HepG2 (cell line): ENCODE measurements at regions of chr6 and their contacts with region 1.

Region 1: GRCh38 chr6:45714741-45715507 is 300.7 kb downstream of the CLIC5 start:
- DNase-seq: peak; percentile 74
- ATAC-seq: peak; percentile 97
- H3K4me3 ChIP-seq: no peak overlapping the region
- H3K27ac ChIP-seq: no peak overlapping the region
- H3K4me1 ChIP-seq: no peaks in the 10 kb centered on the region
- H3K27me3 ChIP-seq: peaks cover 0 to 5% of the 10 kb centered on the region in 2 experiments; a peak in 1 of 5 replicates
- CTCF ChIP-seq: peak; percentile 94
- EP300 ChIP-seq: no peak
- POLR2A ChIP-seq: no peak
- RAD21 ChIP-seq: peak; percentile 92

Region 2: GRCh38 chr6:44475779-44476434 is 1239.0 kb before region 1 on chr6:
- CTCF ChIA-PET with region 1: interaction called, 4 read pairs
- POLR2A ChIA-PET with region 1: no interaction called
- in situ Hi-C with region 1: loop called (anchors 10 kb)
- intact Hi-C with region 1: loop called (anchors 1 kb)
- DNase-seq: peak; percentile 59
- ATAC-seq: peak; percentile 95
- H3K4me3 ChIP-seq: peak overlapping the region; percentile 32 to 74 (median 34); a peak in 5 of 6 replicates
- H3K27ac ChIP-seq: no peak overlapping the region
- H3K4me1 ChIP-seq: peaks cover 9% of the 10 kb centered on the region; the same call in 1 of the 2 replicates
- H3K27me3 ChIP-seq: peaks cover 11 to 89% of the 10 kb centered on the region in 2 experiments; a peak in 4 of 5 replicates
- CTCF ChIP-seq: peak; percentile 100
- EP300 ChIP-seq: no peak
- POLR2A ChIP-seq: no peak
- RAD21 ChIP-seq: peak; percentile 96

Region 3: DNA sequence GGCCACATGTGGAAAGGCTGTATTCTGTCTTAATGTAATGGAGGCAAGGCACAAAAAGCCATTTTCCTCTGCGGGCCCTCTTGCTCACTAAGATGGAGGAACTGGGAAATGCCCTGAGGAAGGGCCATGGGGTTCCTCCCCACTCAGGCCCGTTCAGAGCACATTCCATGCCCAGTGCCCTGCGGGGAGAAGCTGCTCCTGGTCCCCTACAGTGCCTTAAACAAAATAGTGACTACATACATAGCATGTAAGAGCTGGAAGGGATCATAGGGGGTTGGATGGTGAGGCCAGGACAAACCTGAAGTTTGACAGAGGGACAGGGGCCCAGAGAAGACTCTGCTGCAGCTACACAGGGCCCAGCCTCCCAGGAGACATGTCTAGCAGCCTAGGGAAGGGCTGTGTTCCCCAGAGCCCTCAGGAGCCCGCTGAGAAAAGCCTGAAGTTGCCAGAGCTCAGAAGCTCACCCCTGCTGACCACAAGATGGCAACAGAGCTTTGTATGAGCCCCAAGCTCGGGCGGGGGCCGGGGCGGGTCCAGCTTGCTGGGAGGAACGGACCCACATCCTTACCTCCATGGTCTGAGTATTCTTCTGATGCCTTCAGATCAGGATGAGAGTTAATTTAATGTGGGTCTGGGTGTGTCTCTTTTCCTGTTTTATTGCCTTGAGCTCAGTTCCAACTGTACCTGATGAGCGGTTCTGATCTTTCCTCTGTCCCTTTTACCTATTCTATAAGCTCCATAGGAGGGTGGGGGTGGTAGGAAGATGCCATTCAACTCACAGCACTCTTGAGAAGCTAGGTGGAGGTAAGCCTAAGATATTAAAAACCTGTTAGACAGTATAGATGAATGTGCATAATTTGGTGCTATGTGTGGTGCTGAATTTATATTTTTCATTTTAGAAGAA is 1084.5 kb before region 1 on chr6:
- CTCF ChIA-PET with region 1: interaction called, 6 read pairs
- POLR2A ChIA-PET with region 1: no interaction called
- in situ Hi-C with region 1: no loop called
- intact Hi-C with region 1: loop called (anchors 1 kb)
- DNase-seq: peak; percentile 30
- ATAC-seq: peak; percentile 89
- H3K4me3 ChIP-seq: no peak overlapping the region
- H3K27ac ChIP-seq: no peak overlapping the region
- H3K4me1 ChIP-seq: peaks cover 8% of the 10 kb centered on the region
- H3K27me3 ChIP-seq: peaks cover 0 to 31% of the 10 kb centered on the region in 2 experiments; a peak in 2 of 5 replicates
- CTCF ChIP-seq: peak; percentile 72
- EP300 ChIP-seq: no peak
- POLR2A ChIP-seq: no peak
- RAD21 ChIP-seq: peak; percentile 53

Region 4: GRCh38 chr6:45421709-45422502 is 293.0 kb before region 1 on chr6:
- CTCF ChIA-PET with region 1: no interaction called
- POLR2A ChIA-PET with region 1: no interaction called
- in situ Hi-C with region 1: no loop called
- intact Hi-C with region 1: loop called (anchors 5 kb)
- DNase-seq: peak; percentile 16
- ATAC-seq: peak; percentile 83
- H3K4me3 ChIP-seq: peak overlapping the region; percentile 64 to 78 (median 66)
- H3K27ac ChIP-seq: no peak overlapping the region
- H3K4me1 ChIP-seq: peaks cover 24% of the 10 kb centered on the region
- H3K27me3 ChIP-seq: peaks cover 20 to 62% of the 10 kb centered on the region in 2 experiments
- CTCF ChIP-seq: peak; percentile 45
- EP300 ChIP-seq: no peak
- POLR2A ChIP-seq: no peak
- RAD21 ChIP-seq: no peak

Region 5: DNA sequence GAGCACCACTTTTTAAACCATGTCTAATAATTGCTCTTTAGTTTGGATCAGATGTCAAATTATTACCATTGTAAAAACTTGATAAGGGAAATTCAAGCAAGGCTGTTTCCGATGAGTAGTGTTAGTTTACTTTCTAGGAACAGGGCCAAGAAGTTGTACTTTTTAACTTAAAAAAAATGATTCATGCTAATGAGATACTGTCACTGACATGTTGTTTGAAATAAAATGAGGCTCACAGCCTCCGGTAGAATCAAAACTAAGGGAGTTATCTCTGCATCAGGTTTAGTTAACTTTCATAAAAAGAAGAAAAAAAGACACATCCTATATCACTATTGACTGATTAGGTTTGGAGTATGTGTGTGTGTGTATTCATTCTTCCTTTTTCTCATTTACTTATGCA is 281.9 kb before region 1 on chr6:
- CTCF ChIA-PET with region 1: no interaction called
- POLR2A ChIA-PET with region 1: no interaction called
- in situ Hi-C with region 1: no loop called
- intact Hi-C with region 1: no loop called
- DNase-seq: no peak
- ATAC-seq: no peak
- H3K4me3 ChIP-seq: no peak overlapping the region
- H3K27ac ChIP-seq: no peak overlapping the region
- H3K4me1 ChIP-seq: 0 out of 2 replicates have a peak, but pooled peaks cover 4% of the 10 kb centered on the region
- H3K27me3 ChIP-seq: no peaks in the 10 kb centered on the region
- CTCF ChIP-seq: no peak
- EP300 ChIP-seq: no peak
- POLR2A ChIP-seq: no peak
- RAD21 ChIP-seq: no peak

Region 6: DNA sequence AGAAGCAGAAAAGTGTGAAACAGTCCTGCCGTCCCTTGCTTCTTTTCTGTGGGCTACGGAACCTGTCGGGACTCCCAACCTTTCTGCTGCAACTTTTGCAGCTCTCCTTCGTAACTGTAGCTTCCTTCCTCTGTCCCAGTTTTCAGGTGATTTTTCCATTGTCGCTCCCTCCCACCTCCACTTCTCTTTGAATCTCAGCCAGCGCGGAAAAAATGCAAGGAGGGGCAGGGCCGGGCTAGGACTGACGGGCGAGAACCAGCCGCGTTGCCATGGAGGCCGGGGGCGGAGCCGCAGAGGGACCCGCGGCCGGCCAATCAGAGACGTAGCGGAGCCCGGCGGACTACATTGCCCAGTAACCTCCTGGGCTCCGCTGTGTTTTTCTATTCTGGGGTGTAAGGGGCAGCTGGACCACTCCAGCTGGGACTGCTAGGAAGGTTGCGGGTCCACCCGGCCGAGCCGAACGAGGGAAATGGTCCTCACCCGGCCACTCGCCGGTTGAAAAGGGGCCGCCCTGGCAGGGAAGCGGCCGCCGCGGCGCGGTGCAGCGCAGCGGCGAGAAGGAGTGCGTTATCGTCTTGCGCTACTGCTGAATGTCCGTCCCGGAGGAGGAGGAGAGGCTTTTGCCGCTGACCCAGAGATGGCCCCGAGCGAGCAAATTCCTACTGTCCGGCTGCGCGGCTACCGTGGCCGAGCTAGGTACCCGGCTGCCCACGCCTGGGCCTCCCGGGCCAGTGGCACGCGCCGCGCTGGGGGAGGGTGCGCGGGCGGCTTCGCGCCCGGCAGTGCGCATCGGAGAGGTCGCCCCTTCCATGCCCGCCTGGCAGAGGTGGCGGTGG is 937.9 kb after region 1 on chr6 and contains the starts of genes CYP39A1 and SLC25A27:
- CTCF ChIA-PET with region 1: no interaction called
- POLR2A ChIA-PET with region 1: no interaction called
- in situ Hi-C with region 1: no loop called
- intact Hi-C with region 1: loop called (anchors 5 kb)
- DNase-seq: peak; percentile 79
- ATAC-seq: peak; percentile 99
- H3K4me3 ChIP-seq: peak within 1 kb of the TSS; percentile 69 to 79 (median 70); a peak in 5 of 6 replicates
- H3K27ac ChIP-seq: no peak within 1 kb of the TSS
- H3K4me1 ChIP-seq: peaks cover 20% of the 10 kb centered on the region
- H3K27me3 ChIP-seq: peaks cover 0 to 25% of the 10 kb centered on the region in 2 experiments; a peak in 2 of 5 replicates
- CTCF ChIP-seq: no peak
- EP300 ChIP-seq: no peak
- POLR2A ChIP-seq: no peak
- RAD21 ChIP-seq: no peak
- total RNA-seq, gene CYP39A1: not detected in 2 replicates
- total RNA-seq, gene SLC25A27: 0.32 and 0.46 TPM in 2 replicates